ENCODE measurements at regions of chr9 and their contacts with region 1.

Region 1: DNA sequence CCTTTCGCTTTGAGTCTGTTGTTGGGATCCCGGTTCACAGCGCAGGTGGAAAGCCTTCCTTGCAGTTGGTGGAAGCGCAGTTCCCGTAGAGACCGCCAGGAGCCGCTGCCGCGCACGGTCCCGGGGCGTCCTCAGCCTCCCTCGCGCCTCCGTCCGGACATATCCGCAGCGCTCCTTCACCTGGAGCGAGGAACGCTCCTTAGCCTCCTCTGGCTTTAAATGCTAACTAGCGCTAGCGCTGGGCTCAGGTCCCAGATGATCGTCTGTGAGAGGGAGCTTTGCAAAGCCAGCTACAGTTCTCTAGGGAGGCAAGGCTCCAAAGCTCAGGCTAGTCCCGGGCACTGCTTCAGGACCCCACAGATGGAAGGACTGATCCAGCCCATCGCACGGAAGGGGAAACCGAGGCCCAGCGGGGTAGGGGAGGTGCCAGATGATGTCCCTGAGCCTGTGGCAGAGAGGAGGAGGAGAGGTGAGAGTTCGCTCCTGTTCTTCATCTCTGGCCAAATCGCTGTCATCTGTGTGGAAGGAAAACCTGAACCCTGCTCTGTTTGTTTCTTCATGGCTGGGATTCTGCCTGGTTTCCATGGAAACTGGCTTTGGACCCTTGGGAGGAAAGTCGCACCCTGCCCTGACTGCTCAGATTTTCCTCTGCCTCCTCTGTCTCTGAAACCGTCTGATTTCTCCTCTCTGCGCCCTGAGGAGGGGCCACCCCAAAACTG is 31.4 kb downstream of the COL15A1 start:
- DNase-seq: peak; percentile 85 to 92 (median 86)
- ATAC-seq: peak; percentile 30 to 73 (median 71)
- H3K4me3 ChIP-seq: peak overlapping the region in 10 of 12 donors; percentile 14 to 46 (median 38)
- H3K27ac ChIP-seq: peak overlapping the region; percentile 53 to 91 (median 78)
- H3K4me1 ChIP-seq: peaks cover 6 to 97% (median 76%) of the 10 kb centered on the region in 12 donors
- H3K27me3 ChIP-seq: peaks cover 0 to 9% (median 0%) of the 10 kb centered on the region in 9 donors
- CTCF ChIP-seq: peak; percentile 94 to 100 (median 99)
- POLR2A ChIP-seq: peak in 1 of 2 donors; percentile 7

Region 2: GRCh38 chr9:98867429-98868168 is 107.6 kb before region 1 on chr9:
- intact Hi-C with region 1: loop called in 8 of 10 experiments (anchors 2 to 10 kb)
- DNase-seq: peak; percentile 86 to 93 (median 87)
- ATAC-seq: peak; percentile 84 to 92 (median 88)
- H3K4me3 ChIP-seq: no peak overlapping the region
- H3K27ac ChIP-seq: peak overlapping the region; percentile 43 to 92 (median 81)
- H3K4me1 ChIP-seq: peaks cover 0 to 71% (median 53%) of the 10 kb centered on the region in 12 donors
- H3K27me3 ChIP-seq: no peaks in the 10 kb centered on the region
- CTCF ChIP-seq: no peak
- POLR2A ChIP-seq: no peak

Region 3: GRCh38 chr9:98887918-98888510 is 87.1 kb before region 1 on chr9:
- intact Hi-C with region 1: loop called in 2 of 10 experiments (anchors 5 kb)
- DNase-seq: no peak
- ATAC-seq: no peak
- H3K4me3 ChIP-seq: no peak overlapping the region
- H3K27ac ChIP-seq: peak overlapping the region in 9 of 12 donors; percentile 8 to 82 (median 70)
- H3K4me1 ChIP-seq: peaks cover 0 to 80% (median 52%) of the 10 kb centered on the region in 12 donors
- H3K27me3 ChIP-seq: no peaks in the 10 kb centered on the region
- CTCF ChIP-seq: no peak
- POLR2A ChIP-seq: no peak

Region 4: DNA sequence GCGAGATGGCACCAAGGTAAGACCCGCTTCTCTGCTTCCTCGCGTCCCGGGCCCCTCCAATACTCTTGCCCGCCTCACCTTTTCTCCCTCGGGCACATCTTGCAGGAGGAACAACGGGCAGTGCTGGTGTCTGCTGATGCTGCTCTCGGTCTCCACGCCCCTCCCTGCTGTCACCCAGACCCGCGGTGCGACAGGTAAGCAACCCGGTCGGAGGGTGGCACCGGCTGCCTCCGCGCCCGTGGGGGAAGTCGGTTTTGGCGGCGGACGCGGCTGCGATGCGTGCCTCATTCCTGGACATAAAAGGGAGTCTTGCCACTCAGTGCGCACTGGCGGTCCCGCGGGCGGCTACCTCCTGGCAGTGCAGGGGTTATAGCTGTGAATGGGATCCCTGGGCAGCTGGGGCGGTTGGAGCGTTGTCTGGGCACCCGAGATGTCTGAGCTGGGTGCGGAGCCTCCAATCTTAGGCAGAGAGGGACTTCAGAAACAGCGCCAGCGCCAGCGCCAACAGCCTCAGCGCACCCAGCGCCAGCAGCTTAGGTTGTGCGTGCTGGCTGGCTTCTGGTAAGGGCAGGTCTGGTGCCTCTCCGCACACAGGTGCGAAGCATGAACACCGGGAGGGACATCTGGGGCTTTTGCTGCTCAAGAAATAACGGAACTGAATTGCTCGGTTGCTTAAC is 31.0 kb before region 1 on chr9:
- intact Hi-C with region 1: loop called in 1 of 10 experiments (anchors 2 kb)
- DNase-seq: peak in 3 of 5 donors; percentile 44 to 68 (median 61)
- ATAC-seq: peak in 3 of 4 donors; percentile 54 to 59 (median 57)
- H3K4me3 ChIP-seq: peak overlapping the region; percentile 46 to 89 (median 76)
- H3K27ac ChIP-seq: peak overlapping the region; percentile 24 to 93 (median 84)
- H3K4me1 ChIP-seq: peaks cover 3 to 61% (median 29%) of the 10 kb centered on the region in 12 donors
- H3K27me3 ChIP-seq: peaks cover 0 to 44% (median 0%) of the 10 kb centered on the region in 9 donors
- CTCF ChIP-seq: no peak
- POLR2A ChIP-seq: no peak